OCI-LY7 (cell line): ENCODE measurements at regions of chr10 and their contacts with region 1.

Region 1: DNA sequence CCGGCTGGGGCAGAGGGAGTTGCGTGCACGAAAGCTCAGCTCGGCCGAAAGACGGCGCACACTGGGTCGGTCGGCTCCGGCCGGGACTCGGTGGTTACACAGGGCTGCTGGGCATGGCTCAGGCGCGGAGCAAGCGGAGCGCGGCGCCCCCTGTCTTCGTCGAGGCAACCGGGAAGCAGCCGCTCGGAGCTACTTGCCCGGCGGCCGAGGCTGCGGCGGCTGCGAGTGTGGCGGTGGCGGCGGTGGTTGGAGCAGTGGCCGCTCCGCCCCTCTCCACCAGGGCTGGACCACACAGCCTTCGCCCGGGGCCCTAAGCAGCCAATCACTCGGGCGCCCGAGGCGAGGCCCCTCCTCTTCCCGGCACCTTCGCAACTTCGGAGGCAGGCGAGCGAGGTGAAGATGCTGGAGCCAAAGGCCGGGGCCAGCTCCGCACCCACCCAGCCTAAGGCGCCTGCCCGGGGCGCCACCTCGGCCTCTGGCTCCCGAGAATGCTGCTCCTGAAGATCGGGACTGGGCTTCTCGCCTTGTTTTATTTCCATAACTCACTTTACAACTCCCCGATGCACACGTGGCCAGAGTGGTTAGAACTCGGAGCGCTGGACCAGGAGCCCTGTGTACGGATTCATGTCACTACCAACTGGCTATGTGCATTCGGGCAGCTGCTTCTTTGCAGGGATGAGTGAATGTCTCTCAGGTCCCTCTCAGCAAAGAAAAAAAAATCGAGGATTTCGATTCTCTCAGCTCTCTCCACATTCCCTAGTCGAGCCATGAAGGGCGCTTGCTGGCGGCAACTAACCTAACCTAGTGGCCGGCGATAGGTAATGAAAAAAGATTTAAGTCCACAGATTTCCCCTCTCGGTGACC is at the start of gene TLL2:
- DNase-seq: peak; percentile 84
- H3K4me3 ChIP-seq: peak within 1 kb of the TSS; percentile 69
- H3K27ac ChIP-seq: peak within 1 kb of the TSS; percentile 9
- H3K4me1 ChIP-seq: peaks cover 19% of the 10 kb centered on the region
- CTCF ChIP-seq: peak; percentile 68
- total RNA-seq, gene TLL2: 0.18 and 1.1 TPM in 2 replicates

Region 2: DNA sequence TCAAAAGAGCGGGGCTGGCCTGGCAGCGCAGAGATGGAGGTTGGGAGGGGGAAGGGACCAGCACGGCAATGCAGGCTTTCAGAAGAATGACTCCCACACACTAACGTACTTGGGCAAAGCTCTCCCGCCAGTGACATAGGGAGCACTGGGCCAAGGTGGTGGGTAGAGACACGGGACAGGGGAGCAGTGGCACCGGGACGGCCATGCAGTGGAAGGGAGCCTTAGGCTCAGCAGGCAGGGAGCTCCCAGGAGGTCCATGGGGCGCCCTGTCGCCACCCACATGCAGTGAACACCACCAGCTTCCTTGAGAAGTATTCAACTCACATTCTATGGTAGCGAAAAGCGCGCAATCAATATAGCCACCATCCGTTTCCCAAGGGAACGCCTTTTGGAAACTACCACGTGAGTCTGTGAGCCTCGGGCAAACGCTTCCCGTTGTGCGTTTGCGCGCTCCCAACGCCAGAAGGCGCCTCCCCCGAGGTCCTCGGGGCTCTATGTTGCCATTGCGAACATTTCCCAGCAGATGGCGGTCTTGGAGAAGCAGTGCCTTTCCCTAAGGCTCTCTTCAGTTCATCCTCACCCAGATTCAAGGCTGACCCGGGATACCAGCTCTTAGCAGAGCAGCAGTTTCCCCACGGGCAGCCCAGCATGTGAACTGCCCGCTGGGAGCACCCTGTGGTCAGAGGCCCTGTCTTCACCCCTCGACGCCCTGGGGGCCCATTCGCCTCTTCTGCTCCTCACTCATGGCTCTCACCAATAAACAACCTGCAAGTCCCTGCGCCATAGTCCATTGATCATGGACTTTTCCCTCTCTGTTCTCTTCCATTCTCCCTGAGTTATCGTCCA is 138.7 kb before region 1 on chr10:
- CTCF ChIA-PET with region 1: no interaction called
- POLR2A ChIA-PET with region 1: no interaction called
- intact Hi-C with region 1: loop called (anchors 2 kb)
- DNase-seq: peak; percentile 88
- H3K4me3 ChIP-seq: peak overlapping the region; percentile 63
- H3K27ac ChIP-seq: no peak overlapping the region
- H3K4me1 ChIP-seq: peaks cover 6% of the 10 kb centered on the region
- CTCF ChIP-seq: peak; percentile 94

Region 3: DNA sequence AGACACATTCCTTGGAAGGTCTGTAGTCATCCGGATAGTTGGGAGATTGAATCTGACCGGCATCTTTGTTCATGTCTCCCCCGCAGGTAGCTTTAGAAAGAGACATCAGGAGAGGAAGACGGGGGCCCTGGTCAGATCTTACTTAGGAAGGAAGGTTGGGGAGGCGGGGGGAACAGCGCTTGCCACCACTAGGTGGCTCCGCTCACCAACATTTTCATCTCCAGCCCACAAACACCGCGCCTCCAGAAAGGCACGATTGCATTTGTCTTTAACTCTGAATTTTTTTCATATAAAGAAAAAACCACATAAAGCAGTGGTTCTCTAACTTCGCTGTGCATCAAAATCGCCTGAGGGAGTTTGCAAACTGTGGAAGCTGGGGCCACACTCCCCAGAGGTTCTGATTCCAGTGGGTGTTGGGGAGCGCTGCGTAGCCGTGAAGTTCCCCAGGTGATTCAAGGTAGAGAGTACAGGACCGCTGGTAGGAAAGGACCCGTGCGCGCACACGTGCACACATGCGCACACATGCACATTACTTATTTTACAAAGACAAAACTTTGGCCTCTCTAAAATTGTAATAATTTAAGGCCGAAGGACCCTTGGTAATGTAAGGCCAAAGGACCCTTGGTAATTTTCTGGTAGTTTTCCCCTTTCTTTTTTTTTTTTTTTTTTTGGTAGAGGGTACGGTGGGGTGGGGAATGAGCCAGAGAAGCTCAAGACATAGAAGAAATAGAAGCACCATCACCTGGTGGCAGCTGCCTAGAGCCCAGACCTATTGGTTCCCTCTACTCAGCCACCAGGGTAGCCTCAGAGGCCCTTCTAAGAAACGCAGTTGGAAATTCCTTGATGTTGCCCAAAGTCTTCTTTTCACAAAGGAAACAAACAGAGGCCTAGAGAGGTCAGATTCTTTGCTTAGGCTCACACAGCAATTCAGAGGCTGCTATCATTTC is 117.7 kb before region 1 on chr10:
- CTCF ChIA-PET with region 1: interaction called, 6 read pairs
- POLR2A ChIA-PET with region 1: no interaction called
- intact Hi-C with region 1: loop called (anchors 2 kb)
- DNase-seq: peak; percentile 68
- H3K4me3 ChIP-seq: no peak overlapping the region
- H3K27ac ChIP-seq: no peak overlapping the region
- H3K4me1 ChIP-seq: no peaks in the 10 kb centered on the region
- CTCF ChIP-seq: peak; percentile 94

Region 4: GRCh38 chr10:96743988-96744585 is 230.2 kb after region 1 on chr10:
- CTCF ChIA-PET with region 1: interaction called, 3 read pairs
- POLR2A ChIA-PET with region 1: no interaction called
- intact Hi-C with region 1: loop called (anchors 10 kb)
- DNase-seq: peak; percentile 71
- H3K4me3 ChIP-seq: no peak overlapping the region
- H3K27ac ChIP-seq: peak overlapping the region; percentile 42
- H3K4me1 ChIP-seq: peaks cover 65% of the 10 kb centered on the region
- CTCF ChIP-seq: peak; percentile 87